ENCODE measurements at regions of chr6 and their contacts with region 1.

Region 1: GRCh38 chr6:156564127-156564806 is 212.9 kb upstream of the ARID1B start:
- DNase-seq: peak; percentile 82
- ATAC-seq: peak; percentile 99
- H3K4me3 Mint-ChIP-seq: no peak overlapping the region
- H3K27ac Mint-ChIP-seq: no peak overlapping the region
- H3K4me1 Mint-ChIP-seq: no peaks in the 10 kb centered on the region
- H3K27me3 Mint-ChIP-seq: peaks cover 9% of the 10 kb centered on the region
- CTCF ChIP-seq: peak; percentile 81

Region 2: DNA sequence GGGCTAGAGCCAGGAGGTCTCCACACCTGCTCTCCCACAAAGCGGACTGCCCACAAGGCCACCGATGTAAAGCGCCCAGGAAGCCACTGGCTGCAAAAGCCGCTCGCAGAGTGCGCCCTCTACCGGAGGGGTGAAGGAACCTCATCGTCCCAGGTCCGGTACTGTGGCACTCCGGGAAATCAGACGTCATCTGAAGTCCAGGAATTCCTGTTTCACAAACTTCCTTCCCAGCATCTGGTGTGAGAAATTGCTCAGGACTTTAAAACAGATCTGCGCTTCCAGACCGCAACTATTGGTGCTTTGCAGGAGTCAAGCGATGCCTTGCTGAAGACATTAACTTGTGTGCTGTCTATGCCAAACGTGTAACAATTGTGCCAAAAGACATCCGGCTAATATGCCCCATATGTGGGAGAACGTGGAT is 97.8 kb after region 1 on chr6:
- CTCF ChIA-PET with region 1: no interaction called
- POLR2A ChIA-PET with region 1: no interaction called
- intact Hi-C with region 1: loop called (anchors 5 kb)
- DNase-seq: peak; percentile 61
- ATAC-seq: peak; percentile 70
- H3K4me3 Mint-ChIP-seq: no peak overlapping the region
- H3K27ac Mint-ChIP-seq: no peak overlapping the region
- H3K4me1 Mint-ChIP-seq: peaks cover 7% of the 10 kb centered on the region
- H3K27me3 Mint-ChIP-seq: peaks cover 4% of the 10 kb centered on the region
- CTCF ChIP-seq: peak; percentile 72

Measured in activated CD8-positive, alpha-beta T cell treated with anti-CD3 and anti-CD28 coated beads for 36 hours (primary cell).